ENCODE measurements at regions of chr2 and their contacts with region 1.

Region 1: DNA sequence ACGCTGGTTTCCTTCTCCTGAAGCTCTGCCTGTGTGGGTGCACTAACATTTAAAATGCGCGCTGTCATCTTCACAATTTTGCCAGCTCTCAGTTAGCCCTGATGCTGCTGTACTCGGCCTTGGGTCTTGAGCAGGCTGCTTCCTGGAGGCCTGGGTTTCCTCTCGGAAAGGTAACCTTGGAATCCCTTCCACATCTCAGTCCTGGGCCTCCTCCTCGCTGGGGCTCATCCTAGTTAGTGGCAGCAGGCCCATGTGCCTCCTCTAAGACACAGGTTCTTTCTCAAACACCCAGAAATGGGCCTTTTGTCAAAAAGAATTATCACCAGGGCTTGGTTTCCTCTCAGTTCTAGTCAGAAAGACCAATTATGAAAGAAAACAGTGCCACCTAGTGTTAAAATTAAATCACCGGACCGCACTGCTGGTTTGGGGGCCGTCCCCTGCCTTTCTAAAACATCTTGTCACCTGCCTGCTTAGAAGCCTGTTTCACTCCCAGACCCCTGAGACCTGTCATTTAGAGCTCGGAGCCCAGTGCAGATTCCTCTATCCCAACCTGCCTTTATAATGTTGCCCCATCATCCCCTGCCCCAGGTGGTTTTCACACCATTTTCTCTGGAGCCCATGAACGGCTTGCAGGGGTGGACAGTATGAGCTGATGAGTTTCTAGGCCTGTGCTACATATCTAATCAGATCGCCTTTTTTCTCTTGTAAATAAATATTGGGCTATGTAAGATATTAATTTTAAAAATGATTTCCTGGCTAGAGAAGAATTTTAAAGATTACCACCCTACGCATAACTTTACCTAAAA is 42.4 kb downstream of the HK2 start:
- DNase-seq: no peak
- ATAC-seq: peak; percentile 69 to 71

Region 2: GRCh38 chr2:74147727-74148456 is 728.4 kb before region 1 on chr2 and contains the start of gene BOLA3:
- intact Hi-C with region 1: loop called in 1 of 2 experiments (anchors 10 kb)
- DNase-seq: peak; percentile 90
- ATAC-seq: peak; percentile 98
- total RNA-seq, gene BOLA3: 91.6 to 102 TPM

Region 3: GRCh38 chr2:74715078-74715791 is 161.0 kb before region 1 on chr2:
- intact Hi-C with region 1: loop called (anchors 2 kb)
- DNase-seq: peak; percentile 80
- ATAC-seq: peak; percentile 85 to 97

Region 4: GRCh38 chr2:74834792-74835752 is 41.2 kb before region 1 on chr2:
- intact Hi-C with region 1: loop called in 1 of 2 experiments (anchors 5 kb)
- DNase-seq: peak; percentile 49
- ATAC-seq: peak; percentile 40 to 63

Measured in left cardiac atrium (tissue), 4 donors.